ENCODE measurements at regions of chr4 and their contacts with region 1.

Region 1: DNA sequence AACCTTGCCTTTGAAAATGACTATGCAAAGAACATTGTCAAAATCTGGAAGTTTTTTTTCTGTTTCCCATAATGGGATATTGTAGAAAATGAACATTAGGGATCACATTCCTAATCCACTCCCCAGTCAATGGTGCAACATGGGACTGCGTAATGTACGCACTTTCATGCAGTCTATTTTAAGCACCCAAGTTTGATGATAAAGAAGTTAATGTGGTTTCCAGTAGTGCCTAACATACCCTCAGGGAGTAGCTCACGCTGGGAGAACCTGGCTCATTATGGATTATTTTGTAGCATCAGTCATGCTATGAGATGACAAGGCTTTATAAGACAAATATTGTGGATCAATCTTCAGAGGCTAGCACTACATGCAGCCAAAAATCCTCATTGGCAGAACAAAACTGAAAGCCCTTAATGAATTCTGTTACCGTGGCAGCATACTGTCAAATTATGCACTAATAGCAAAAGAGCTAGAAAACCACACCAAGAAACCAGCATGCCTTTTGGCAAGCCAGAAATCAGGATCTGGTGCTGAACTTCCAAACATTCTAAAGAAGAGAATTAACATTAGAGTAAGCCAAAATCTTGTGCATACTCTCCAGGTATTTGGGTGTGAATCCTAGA is 1392.8 kb upstream of the TENM3 start:
- DNase-seq: peak; percentile 13
- H3K4me3 Mint-ChIP-seq: no peak overlapping the region
- H3K27ac Mint-ChIP-seq: no peak overlapping the region
- H3K4me1 Mint-ChIP-seq: no peaks in the 10 kb centered on the region
- H3K27me3 Mint-ChIP-seq: no peaks in the 10 kb centered on the region
- CTCF ChIP-seq: no peak

Region 2: GRCh38 chr4:180766944-180767729 is 83.3 kb before region 1 on chr4:
- CTCF ChIA-PET with region 1: no interaction called
- POLR2A ChIA-PET with region 1: no interaction called
- intact Hi-C with region 1: no loop called
- DNase-seq: no peak
- H3K4me3 Mint-ChIP-seq: no peak overlapping the region
- H3K27ac Mint-ChIP-seq: peak overlapping the region; percentile 26
- H3K4me1 Mint-ChIP-seq: peaks cover 8% of the 10 kb centered on the region
- H3K27me3 Mint-ChIP-seq: no peaks in the 10 kb centered on the region
- CTCF ChIP-seq: no peak

Region 3: GRCh38 chr4:180828440-180829018 is 21.9 kb before region 1 on chr4:
- CTCF ChIA-PET with region 1: interaction called, 24 read pairs
- POLR2A ChIA-PET with region 1: interaction called, 6 read pairs
- intact Hi-C with region 1: no loop called
- DNase-seq: peak; percentile 71
- H3K4me3 Mint-ChIP-seq: no peak overlapping the region
- H3K27ac Mint-ChIP-seq: no peak overlapping the region
- H3K4me1 Mint-ChIP-seq: peaks cover 11% of the 10 kb centered on the region
- H3K27me3 Mint-ChIP-seq: no peaks in the 10 kb centered on the region
- CTCF ChIP-seq: peak; percentile 63

Measured in MCF 10A (cell line).